CD8-positive, alpha-beta memory T cell (primary cell): ENCODE measurements at regions of chr12 and their contacts with region 1.

Region 1: GRCh38 chr12:67648521-67649260 is at the start of gene DYRK2:
- DNase-seq: peak; percentile 68 to 86 (median 79)
- H3K4me3 ChIP-seq: peak within 1 kb of the TSS; percentile 94
- H3K4me3 Mint-ChIP-seq: peak within 1 kb of the TSS; percentile 94 to 100 (median 99)
- H3K27ac ChIP-seq: peak within 1 kb of the TSS; percentile 81
- H3K27ac Mint-ChIP-seq: peak within 1 kb of the TSS; percentile 82 to 99 (median 92)
- H3K4me1 ChIP-seq: peaks cover 32% of the 10 kb centered on the region
- H3K4me1 Mint-ChIP-seq: peaks cover 39 to 46% (median 45%) of the 10 kb centered on the region in 3 donors
- H3K27me3 ChIP-seq: no peaks in the 10 kb centered on the region
- H3K27me3 Mint-ChIP-seq: no peaks in the 10 kb centered on the region
- total RNA-seq, gene DYRK2: 44.7 to 47.6 TPM

Region 2: GRCh38 chr12:67355578-67356379 is 292.9 kb before region 1 on chr12:
- CTCF ChIA-PET with region 1: interaction called, 17 read pairs
- POLR2A ChIA-PET with region 1: interaction called, 10 read pairs
- DNase-seq: peak in 2 of 5 donors; percentile 43 to 45
- H3K4me3 ChIP-seq: no peak overlapping the region
- H3K4me3 Mint-ChIP-seq: peak overlapping the region in 1 of 7 donors; percentile 34
- H3K27ac ChIP-seq: no peak overlapping the region
- H3K27ac Mint-ChIP-seq: peak overlapping the region in 1 of 8 donors; percentile 2
- H3K4me1 ChIP-seq: peaks cover 4% of the 10 kb centered on the region
- H3K4me1 Mint-ChIP-seq: peaks cover 9 to 15% (median 10%) of the 10 kb centered on the region in 3 donors
- H3K27me3 ChIP-seq: no peaks in the 10 kb centered on the region
- H3K27me3 Mint-ChIP-seq: peaks cover 0 to 3% of the 10 kb centered on the region in 2 donors

Region 3: GRCh38 chr12:67482751-67483671 is 165.7 kb before region 1 on chr12:
- CTCF ChIA-PET with region 1: interaction called, 4 read pairs
- POLR2A ChIA-PET with region 1: interaction called, 15 read pairs
- DNase-seq: peak; percentile 51 to 89 (median 76)
- H3K4me3 ChIP-seq: no peak overlapping the region
- H3K4me3 Mint-ChIP-seq: peak overlapping the region in 6 of 7 donors; percentile 27 to 83 (median 44)
- H3K27ac ChIP-seq: no peak overlapping the region
- H3K27ac Mint-ChIP-seq: peak overlapping the region; percentile 73 to 95 (median 87)
- H3K4me1 ChIP-seq: peaks cover 47% of the 10 kb centered on the region
- H3K4me1 Mint-ChIP-seq: peaks cover 34 to 52% (median 49%) of the 10 kb centered on the region in 3 donors
- H3K27me3 ChIP-seq: no peaks in the 10 kb centered on the region
- H3K27me3 Mint-ChIP-seq: no peaks in the 10 kb centered on the region

Region 4: GRCh38 chr12:67515679-67516340 is 132.9 kb before region 1 on chr12:
- CTCF ChIA-PET with region 1: interaction called, 13 read pairs
- POLR2A ChIA-PET with region 1: interaction called, 13 read pairs
- DNase-seq: peak in 4 of 5 donors; percentile 5 to 66 (median 42)
- H3K4me3 ChIP-seq: peak overlapping the region; percentile 36
- H3K4me3 Mint-ChIP-seq: peak overlapping the region; percentile 7 to 80 (median 72)
- H3K27ac ChIP-seq: no peak overlapping the region
- H3K27ac Mint-ChIP-seq: peak overlapping the region; percentile 25 to 94 (median 75)
- H3K4me1 ChIP-seq: peaks cover 44% of the 10 kb centered on the region
- H3K4me1 Mint-ChIP-seq: peaks cover 42 to 70% (median 57%) of the 10 kb centered on the region in 3 donors
- H3K27me3 ChIP-seq: no peaks in the 10 kb centered on the region
- H3K27me3 Mint-ChIP-seq: no peaks in the 10 kb centered on the region

Region 5: DNA sequence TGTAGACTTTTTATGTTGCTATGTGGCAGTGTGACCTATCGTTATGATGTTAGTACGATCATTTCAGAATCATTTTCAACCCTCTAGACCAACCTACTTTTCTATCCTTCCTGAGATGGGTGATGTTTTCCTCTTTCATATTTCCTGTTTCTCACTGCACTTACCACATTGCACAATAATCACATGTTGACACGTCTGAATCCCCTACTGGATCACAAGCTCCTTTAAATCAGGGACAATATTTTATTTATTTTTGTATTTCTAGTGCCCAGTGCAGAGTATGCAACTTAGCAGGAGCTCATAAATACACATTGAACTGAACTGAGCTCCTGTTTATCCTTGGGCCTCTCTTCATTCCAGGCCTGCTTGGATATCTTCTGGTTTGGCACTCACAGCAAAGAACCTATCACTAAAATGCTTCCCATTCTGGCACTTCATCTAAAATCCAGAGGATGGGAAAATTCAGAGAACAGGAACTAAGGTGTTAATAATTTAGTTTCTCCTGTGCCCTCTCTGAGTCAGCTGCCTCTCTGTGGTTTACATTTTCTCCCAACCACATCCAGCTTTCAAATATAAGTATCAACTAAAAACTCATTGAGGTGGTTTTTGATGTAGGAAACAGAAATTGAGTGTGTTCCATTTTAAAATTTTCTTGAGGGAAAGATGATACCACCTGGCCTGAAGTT is 69.6 kb before region 1 on chr12:
- CTCF ChIA-PET with region 1: interaction called, 10 read pairs
- POLR2A ChIA-PET with region 1: interaction called, 11 read pairs
- DNase-seq: peak in 2 of 5 donors; percentile 56 to 70
- H3K4me3 ChIP-seq: peak overlapping the region; percentile 20
- H3K4me3 Mint-ChIP-seq: peak overlapping the region; percentile 43 to 86 (median 72)
- H3K27ac ChIP-seq: no peak overlapping the region
- H3K27ac Mint-ChIP-seq: peak overlapping the region; percentile 47 to 97 (median 84)
- H3K4me1 ChIP-seq: peaks cover 38% of the 10 kb centered on the region
- H3K4me1 Mint-ChIP-seq: peaks cover 52 to 67% (median 59%) of the 10 kb centered on the region in 3 donors
- H3K27me3 ChIP-seq: no peaks in the 10 kb centered on the region
- H3K27me3 Mint-ChIP-seq: peaks cover 0 to 2% of the 10 kb centered on the region in 2 donors